ENCODE measurements at regions of chr2 and their contacts with region 1.

Region 1: GRCh38 chr2:109318150-109318948 is 189.3 kb downstream of the SH3RF3 start:
- DNase-seq: peak; percentile 44
- H3K4me3 ChIP-seq: no peak overlapping the region
- H3K27ac ChIP-seq: peak overlapping the region; percentile 37 to 53
- H3K4me1 ChIP-seq: peaks cover 14% of the 10 kb centered on the region
- H3K27me3 ChIP-seq: no peaks in the 10 kb centered on the region
- CTCF ChIP-seq: peak in 1 of 4 experiments; percentile 25
- POLR2A ChIP-seq: no peak

Region 2: DNA sequence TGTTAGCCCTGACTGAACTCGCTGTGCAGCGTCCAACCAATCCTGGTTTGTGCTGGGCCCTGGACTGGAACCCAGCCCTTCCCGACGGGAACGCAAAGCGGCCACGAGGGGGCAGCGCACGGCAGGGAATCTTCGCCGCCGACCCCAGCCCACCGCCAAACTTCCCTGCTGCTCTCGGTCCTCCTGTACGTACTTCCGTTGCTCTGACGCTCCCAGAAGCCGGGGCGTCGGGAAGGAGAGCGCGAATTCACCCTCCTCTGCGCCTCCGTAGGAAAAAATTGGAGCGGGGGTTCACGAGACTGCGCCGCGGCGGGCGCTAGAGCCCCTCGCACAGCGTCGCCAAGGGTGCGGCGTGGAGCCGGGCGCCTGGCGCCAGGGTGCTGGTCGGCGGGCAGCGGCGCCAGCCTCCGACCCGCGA is 190.3 kb before region 1 on chr2:
- intact Hi-C with region 1: loop called (anchors 2 kb)
- DNase-seq: peak; percentile 58
- H3K4me3 ChIP-seq: peak overlapping the region; percentile 44 to 57
- H3K27ac ChIP-seq: peak overlapping the region; percentile 32 to 55
- H3K4me1 ChIP-seq: no peaks in the 10 kb centered on the region
- H3K27me3 ChIP-seq: no peaks in the 10 kb centered on the region
- CTCF ChIP-seq: peak; percentile 84 to 90 (median 88)
- POLR2A ChIP-seq: no peak

Region 3: DNA sequence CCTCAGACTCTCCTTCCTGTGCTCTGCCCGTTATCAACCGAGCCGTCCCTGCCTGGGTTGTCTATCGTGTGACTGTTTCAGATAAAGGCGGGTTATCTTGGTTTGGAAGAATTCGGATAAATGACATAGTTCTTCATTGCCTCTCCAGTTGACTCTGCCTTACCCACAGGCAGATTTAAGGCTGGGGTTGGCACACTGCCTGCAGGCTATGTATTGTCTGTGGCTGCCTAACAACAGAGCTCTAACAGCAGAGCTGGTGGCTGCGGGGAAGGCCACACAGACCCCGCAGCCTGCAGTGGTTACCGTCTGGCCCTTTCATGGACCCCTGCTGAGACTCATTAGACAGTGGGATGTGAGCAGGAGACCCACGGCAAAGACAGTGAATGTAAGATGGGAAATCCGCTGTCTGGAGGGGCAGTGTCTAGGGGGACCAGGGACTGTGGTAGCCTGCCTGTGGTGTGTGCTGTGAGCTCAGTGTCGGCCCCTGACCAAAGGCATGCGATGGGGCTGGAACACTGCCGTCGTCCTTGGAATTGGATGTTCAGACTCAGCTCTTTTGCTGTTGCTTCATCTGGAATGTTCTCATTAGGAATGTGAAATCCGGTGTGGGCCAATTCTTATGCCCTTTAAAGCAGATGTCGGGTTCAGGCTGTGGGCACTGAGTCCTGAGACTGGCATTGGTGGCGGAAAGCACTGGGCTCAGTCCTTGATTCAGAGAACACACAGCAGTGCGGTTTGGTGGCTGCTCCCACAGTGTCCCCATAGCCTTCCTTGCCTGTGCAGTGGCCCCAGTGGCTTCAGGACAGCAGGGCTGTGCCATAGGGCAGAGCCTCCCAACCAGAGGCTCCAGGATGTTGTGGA is 144.8 kb before region 1 on chr2:
- intact Hi-C with region 1: loop called (anchors 5 kb)
- DNase-seq: peak; percentile 9
- H3K4me3 ChIP-seq: no peak overlapping the region
- H3K27ac ChIP-seq: peak overlapping the region; percentile 59 to 67
- H3K4me1 ChIP-seq: no peaks in the 10 kb centered on the region
- H3K27me3 ChIP-seq: no peaks in the 10 kb centered on the region
- CTCF ChIP-seq: no peak
- POLR2A ChIP-seq: no peak

Region 4: GRCh38 chr2:109185821-109186570 is 132.4 kb before region 1 on chr2:
- intact Hi-C with region 1: loop called (anchors 5 kb)
- DNase-seq: no peak
- H3K4me3 ChIP-seq: no peak overlapping the region
- H3K27ac ChIP-seq: peak overlapping the region; percentile 38 to 62
- H3K4me1 ChIP-seq: no peaks in the 10 kb centered on the region
- H3K27me3 ChIP-seq: no peaks in the 10 kb centered on the region
- CTCF ChIP-seq: no peak
- POLR2A ChIP-seq: no peak

Region 5: DNA sequence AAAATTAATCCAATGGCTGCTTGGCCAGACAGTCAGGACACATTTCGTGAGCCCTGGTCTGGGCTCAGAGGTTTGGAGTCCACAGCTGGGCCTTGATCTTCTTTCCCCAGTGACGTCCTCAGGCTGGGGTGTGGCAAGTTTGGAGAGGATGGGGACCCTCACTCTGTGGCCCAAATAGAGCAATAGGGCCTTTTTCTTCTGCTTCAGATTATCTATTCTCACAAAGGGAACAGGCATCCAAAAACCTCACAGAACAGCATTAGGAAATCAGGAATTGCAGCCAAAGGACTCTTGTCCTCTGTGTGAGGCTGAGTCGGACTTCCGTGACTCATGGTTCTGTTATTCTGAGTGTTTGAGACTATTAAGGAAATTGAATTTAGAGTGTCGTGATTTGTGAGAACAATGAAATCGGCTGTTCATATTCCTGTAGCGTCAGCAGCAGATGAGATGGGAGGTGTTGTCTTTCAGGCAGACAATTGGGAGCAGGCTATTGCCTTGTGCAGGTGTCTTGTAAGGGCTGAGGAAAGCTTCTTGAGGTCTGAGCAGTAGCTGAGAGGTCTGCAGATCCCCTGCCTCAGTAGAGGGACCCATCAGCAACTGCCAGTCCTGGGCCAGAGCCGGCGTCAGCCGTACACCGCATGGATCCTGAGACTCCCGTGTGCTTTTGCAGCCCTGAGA is 75.6 kb before region 1 on chr2:
- intact Hi-C with region 1: loop called (anchors 10 kb)
- DNase-seq: peak; percentile 17
- H3K4me3 ChIP-seq: no peak overlapping the region
- H3K27ac ChIP-seq: peak overlapping the region; percentile 52 to 68
- H3K4me1 ChIP-seq: no peaks in the 10 kb centered on the region
- H3K27me3 ChIP-seq: no peaks in the 10 kb centered on the region
- CTCF ChIP-seq: no peak
- POLR2A ChIP-seq: no peak

Region 6: GRCh38 chr2:109396202-109397180 is 78.1 kb after region 1 on chr2:
- intact Hi-C with region 1: no loop called
- DNase-seq: no peak
- H3K4me3 ChIP-seq: no peak overlapping the region
- H3K27ac ChIP-seq: no peak overlapping the region
- H3K4me1 ChIP-seq: no peaks in the 10 kb centered on the region
- H3K27me3 ChIP-seq: no peaks in the 10 kb centered on the region
- CTCF ChIP-seq: no peak
- POLR2A ChIP-seq: no peak

Region 7: DNA sequence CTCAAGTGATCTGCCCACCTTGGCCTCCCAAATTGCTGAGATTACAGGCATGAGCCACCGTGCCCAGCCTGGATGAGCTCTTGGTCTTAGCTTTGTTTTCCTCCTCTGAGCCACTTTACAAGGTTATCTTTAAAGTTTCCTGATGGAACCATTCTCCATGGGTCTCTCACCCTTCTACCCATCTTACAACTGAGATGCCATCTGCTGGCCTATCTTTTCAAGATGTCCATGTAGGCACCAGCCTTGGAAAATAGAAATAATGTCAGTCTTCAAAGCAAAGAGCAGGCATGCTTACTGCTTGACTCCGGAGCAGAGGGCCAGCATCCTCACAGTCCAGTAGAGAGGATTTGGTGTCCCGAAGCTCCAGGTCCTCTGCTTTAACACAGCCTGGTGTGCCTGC is 171.6 kb after region 1 on chr2:
- intact Hi-C with region 1: loop called (anchors 5 kb)
- DNase-seq: no peak
- H3K4me3 ChIP-seq: no peak overlapping the region
- H3K27ac ChIP-seq: no peak overlapping the region
- H3K4me1 ChIP-seq: no peaks in the 10 kb centered on the region
- H3K27me3 ChIP-seq: no peaks in the 10 kb centered on the region
- CTCF ChIP-seq: no peak
- POLR2A ChIP-seq: no peak

Region 8: DNA sequence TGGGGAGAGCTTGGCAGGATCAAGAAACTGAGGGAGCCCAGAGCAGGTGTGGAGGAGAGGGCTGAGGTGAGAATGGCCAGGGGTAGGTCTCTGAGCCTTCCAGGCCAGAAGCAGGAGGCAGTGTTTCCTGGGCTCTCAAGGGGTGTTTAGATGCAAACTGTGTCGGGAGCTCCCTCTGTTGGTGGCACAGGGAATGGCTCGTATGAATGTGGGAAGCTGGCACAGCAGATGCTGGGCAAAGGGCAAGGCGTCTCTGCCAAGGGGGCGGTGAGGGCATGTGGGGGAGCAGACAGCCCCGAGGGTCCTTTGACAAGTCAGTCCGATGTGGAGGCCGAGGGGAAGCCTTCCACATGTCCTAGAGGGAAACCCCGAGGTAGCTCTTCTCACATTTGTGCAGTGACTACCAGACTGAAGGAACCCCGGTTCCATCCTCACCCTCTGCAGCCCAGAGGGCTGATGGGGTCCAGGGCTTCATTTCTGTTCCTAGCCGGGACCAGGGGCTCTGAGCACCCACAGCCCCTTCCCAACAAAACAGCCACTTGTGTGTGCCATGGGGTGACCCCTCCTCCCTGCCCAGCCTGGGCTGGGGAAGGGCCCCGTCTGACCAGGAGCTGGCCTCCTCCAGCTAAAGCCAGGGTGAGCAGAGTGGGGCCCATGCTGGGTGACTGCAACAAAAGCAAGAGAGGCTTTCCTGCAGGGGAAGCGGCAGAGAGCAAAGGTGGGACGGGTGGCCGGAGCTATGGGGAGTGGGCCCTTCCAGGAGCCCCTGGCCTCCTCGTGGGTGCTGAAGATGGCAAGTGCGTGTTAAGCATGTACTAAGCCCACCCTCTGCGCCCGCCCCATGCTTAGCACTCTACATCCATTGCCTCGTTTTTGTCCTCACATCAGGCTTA is 192.0 kb after region 1 on chr2:
- intact Hi-C with region 1: loop called (anchors 5 kb)
- DNase-seq: peak; percentile 81
- H3K4me3 ChIP-seq: no peak overlapping the region
- H3K27ac ChIP-seq: no peak overlapping the region
- H3K4me1 ChIP-seq: no peaks in the 10 kb centered on the region
- H3K27me3 ChIP-seq: no peaks in the 10 kb centered on the region
- CTCF ChIP-seq: peak; percentile 89 to 97 (median 92)
- POLR2A ChIP-seq: no peak

Measured in prostate gland (tissue), 2 donors.